Panc1 (cell line): ENCODE measurements at regions of chr10 and their contacts with region 1.

Region 1: DNA sequence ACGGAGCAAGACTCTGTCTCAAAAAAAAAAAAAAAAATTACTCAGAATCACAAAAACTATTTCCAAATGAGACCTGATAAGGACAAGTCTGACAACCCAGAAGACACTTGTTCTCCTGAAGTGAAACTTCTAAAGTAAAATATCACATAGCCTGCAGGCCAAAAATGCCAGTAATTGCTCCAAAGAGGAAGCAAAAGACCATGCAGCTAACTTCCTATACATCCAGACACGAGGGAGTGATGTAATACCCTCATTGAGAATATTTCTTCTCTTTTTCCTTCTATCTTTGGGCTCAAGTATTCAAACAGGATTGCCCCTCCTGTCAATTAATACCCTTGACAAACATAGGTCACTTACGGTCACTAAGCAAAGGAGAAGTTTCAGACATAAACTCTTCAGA is 31.2 kb downstream of the ARMH3 start:
- DNase-seq: no peak
- ATAC-seq: no peak
- H3K4me3 ChIP-seq: no peak overlapping the region
- H3K27ac ChIP-seq: no peak overlapping the region
- H3K4me1 ChIP-seq: no peaks in the 10 kb centered on the region
- H3K27me3 ChIP-seq: no peaks in the 10 kb centered on the region
- CTCF ChIP-seq: no peak

Region 2: GRCh38 chr10:101879456-101880231 is 145.2 kb before region 1 on chr10:
- CTCF ChIA-PET with region 1: no interaction called
- POLR2A ChIA-PET with region 1: interaction called, 11 read pairs
- in situ Hi-C with region 1: no loop called
- intact Hi-C with region 1: no loop called
- DNase-seq: no peak
- ATAC-seq: peak; percentile 64; the same call in 1 of the 2 replicates
- H3K4me3 ChIP-seq: no peak overlapping the region
- H3K27ac ChIP-seq: no peak overlapping the region
- H3K4me1 ChIP-seq: no peaks in the 10 kb centered on the region
- H3K27me3 ChIP-seq: no peaks in the 10 kb centered on the region
- CTCF ChIP-seq: no peak

Region 3: GRCh38 chr10:102001435-102002068 is 23.2 kb before region 1 on chr10:
- CTCF ChIA-PET with region 1: no interaction called
- POLR2A ChIA-PET with region 1: interaction called, 14 read pairs
- in situ Hi-C with region 1: no loop called
- intact Hi-C with region 1: no loop called
- DNase-seq: no peak
- ATAC-seq: no peak
- H3K4me3 ChIP-seq: no peak overlapping the region
- H3K27ac ChIP-seq: no peak overlapping the region
- H3K4me1 ChIP-seq: no peaks in the 10 kb centered on the region
- H3K27me3 ChIP-seq: no peaks in the 10 kb centered on the region
- CTCF ChIP-seq: no peak

Region 4: DNA sequence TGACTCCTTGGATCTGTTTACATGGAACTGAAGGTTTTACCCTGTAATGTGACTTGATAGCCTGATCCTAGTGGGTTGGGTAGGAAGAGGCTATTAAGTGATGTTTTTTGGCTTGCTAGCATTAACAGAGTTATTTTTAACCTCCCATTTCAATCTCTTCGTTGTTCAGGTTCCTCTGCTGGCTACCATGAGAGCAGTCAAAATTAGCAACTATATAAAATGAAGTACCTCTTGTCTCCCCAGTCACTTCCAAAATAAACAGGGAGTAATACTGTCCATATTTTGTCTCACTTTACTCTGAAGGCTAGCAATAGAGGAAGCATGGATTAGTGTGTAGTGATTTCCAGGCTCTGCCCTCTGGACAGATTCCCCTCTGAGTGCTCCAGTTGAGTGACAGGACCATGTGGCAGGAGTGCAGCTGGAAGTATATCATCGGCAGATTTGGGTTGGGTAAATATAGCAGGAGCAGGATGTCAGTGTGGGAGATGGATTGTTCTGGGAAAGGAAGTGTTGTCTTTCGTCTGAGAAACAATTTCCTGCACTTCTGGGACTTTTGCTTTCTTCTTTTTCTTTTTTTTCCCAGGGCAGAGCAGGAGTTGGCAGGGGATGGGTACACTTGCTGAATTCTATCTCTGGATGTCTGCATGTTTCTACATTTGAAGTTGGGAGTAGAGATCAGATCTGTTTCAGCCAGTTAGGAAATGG is 255.8 kb after region 1 on chr10:
- CTCF ChIA-PET with region 1: no interaction called
- POLR2A ChIA-PET with region 1: no interaction called
- in situ Hi-C with region 1: no loop called
- intact Hi-C with region 1: no loop called
- DNase-seq: no peak
- ATAC-seq: peak; percentile 72
- H3K4me3 ChIP-seq: no peak overlapping the region
- H3K27ac ChIP-seq: no peak overlapping the region
- H3K4me1 ChIP-seq: peaks cover 4% of the 10 kb centered on the region; the same call in 1 of the 2 replicates
- H3K27me3 ChIP-seq: no peaks in the 10 kb centered on the region
- CTCF ChIP-seq: no peak